Ascending aorta (tissue), 2 donors: ENCODE measurements at regions of chr7 and their contacts with region 1.

Region 1: DNA sequence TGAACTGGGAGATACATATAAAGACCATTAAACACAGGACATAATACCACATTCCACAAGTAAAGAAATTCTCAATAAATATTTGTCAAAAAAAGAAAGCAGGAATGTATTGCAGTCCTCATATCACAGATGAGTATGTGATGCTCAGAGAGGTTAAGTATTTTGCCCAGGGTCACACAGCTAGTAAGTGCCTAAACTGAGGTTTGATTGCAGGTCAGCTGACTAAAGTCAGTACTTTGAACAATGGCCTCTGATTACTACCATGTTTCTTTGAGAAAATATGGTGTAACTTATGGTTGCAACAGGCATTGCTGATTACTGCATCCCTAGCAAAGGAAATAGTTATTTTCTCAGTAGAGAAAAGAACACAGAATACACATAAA is 267.1 kb downstream of the ELMO1 start:
- DNase-seq: no peak
- H3K4me3 ChIP-seq: no peak overlapping the region
- H3K27ac ChIP-seq: no peak overlapping the region
- H3K4me1 ChIP-seq: no peaks in the 10 kb centered on the region
- H3K27me3 ChIP-seq: no peaks in the 10 kb centered on the region
- CTCF ChIP-seq: no peak

Region 2: GRCh38 chr7:36967387-36967786 is 214.2 kb before region 1 on chr7:
- intact Hi-C with region 1: loop called (anchors 1 kb)
- DNase-seq: peak in 1 of 2 donors; percentile 79
- H3K4me3 ChIP-seq: no peak overlapping the region
- H3K27ac ChIP-seq: no peak overlapping the region
- H3K4me1 ChIP-seq: no peaks in the 10 kb centered on the region
- H3K27me3 ChIP-seq: no peaks in the 10 kb centered on the region
- CTCF ChIP-seq: peak; percentile 60 to 81 (median 76)

Region 3: DNA sequence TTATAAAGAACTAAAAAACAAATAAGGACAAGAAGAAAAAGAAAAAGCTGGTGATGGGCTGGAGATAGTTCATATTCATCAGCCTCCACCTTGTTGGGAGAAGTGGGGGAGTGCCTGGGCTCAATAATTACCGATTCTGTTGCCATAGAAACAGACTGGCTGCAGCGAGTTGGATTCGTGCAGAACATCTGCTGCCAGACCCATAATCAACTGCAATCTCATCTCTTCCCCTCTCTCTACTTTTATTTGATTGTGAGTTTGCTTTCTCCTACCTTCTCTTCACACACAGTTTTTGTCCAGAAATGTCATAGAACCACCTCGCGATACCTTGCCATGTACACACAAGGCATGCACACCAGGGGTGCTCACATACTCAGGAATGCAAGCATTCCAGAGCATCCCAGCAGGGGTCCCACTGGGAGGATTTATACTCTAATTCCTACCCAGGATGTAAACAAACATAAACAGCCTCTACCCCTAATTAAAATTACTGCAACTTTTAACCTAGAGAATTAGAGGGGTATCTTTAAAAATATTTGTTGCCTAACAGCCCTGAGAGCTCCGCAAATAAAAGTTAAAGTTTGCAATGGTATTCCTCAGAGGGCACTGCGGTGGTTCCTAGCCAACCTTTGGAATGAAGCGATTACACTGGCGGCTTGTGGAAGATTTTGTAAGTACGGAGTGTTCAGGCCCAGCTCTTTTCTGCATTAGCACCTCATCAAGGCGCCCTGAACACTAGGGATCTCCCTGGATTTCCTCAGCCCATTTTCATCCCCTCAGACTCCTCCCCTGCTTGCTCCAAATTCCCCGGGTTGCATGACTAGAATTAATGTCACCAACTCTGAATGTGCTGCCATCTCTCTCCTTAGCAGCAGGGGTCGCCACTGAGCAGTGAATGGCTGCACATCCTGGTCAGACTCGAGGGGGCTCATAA is 194.8 kb before region 1 on chr7:
- intact Hi-C with region 1: loop called (anchors 1 kb)
- DNase-seq: peak; percentile 23 to 77
- H3K4me3 ChIP-seq: no peak overlapping the region
- H3K27ac ChIP-seq: no peak overlapping the region
- H3K4me1 ChIP-seq: no peaks in the 10 kb centered on the region
- H3K27me3 ChIP-seq: no peaks in the 10 kb centered on the region
- CTCF ChIP-seq: peak; percentile 75 to 88 (median 78)

Region 4: GRCh38 chr7:37247861-37248260 is 66.3 kb after region 1 on chr7:
- intact Hi-C with region 1: no loop called
- DNase-seq: no peak
- H3K4me3 ChIP-seq: no peak overlapping the region
- H3K27ac ChIP-seq: no peak overlapping the region
- H3K4me1 ChIP-seq: no peaks in the 10 kb centered on the region
- H3K27me3 ChIP-seq: no peaks in the 10 kb centered on the region
- CTCF ChIP-seq: no peak

Region 5: GRCh38 chr7:37311355-37311754 is 129.8 kb after region 1 on chr7:
- intact Hi-C with region 1: no loop called
- DNase-seq: peak in 1 of 2 donors; percentile 68
- H3K4me3 ChIP-seq: no peak overlapping the region
- H3K27ac ChIP-seq: no peak overlapping the region
- H3K4me1 ChIP-seq: peaks cover 0 to 2% of the 10 kb centered on the region in 2 donors
- H3K27me3 ChIP-seq: no peaks in the 10 kb centered on the region
- CTCF ChIP-seq: no peak